ENCODE measurements at regions of chr20 and their contacts with region 1.

Region 1: GRCh38 chr20:45934586-45935415 is at the start of gene PCIF1:
- DNase-seq: peak; percentile 99
- total RNA-seq, gene PCIF1: 27.3 to 35.7 TPM

Region 2: DNA sequence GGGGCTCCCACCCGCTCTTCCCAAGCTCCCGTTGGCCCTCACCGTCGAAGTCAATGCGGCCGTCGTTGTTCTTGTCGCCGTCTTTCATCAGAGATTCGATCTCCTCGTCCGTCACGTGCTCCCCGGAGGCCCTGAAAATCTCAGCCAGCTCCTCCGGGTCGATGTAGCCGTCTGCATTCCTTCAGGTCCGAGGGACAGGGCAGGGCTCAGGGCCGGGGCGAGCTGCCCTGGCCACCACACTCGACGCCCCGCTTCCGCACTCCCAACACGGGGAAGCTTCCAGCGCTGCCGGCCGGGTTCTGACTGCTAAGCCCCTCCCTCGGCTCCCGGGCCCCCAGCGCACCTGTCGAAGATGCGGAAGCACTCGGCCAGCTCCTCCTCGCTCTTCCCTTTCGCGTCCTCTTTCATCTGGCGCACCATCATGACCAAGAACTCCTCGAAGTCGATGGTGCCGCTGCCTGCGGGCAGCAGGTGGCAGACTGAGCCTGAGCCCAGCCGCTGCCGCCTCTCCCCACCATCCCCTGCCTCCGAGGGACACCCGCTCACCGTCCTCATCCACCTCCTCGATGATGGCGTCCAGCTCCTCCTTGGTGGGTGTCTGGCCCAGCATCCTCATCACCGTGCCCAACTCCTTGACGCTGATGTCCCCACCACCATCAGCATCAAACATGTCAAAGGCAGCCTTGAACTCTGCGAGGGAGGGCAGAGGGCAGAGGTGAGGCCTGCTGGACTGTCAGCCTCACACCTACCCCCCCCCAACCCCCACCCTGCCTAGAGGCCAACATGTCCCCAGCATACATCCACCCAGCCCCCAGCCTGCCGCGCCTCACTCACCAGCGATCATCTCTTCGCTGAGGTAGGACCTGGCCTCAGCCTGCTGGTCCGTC is 110.6 kb before region 1 on chr20:
- intact Hi-C with region 1: loop called in 1 of 2 experiments (anchors 10 kb)
- DNase-seq: no peak

Region 3: DNA sequence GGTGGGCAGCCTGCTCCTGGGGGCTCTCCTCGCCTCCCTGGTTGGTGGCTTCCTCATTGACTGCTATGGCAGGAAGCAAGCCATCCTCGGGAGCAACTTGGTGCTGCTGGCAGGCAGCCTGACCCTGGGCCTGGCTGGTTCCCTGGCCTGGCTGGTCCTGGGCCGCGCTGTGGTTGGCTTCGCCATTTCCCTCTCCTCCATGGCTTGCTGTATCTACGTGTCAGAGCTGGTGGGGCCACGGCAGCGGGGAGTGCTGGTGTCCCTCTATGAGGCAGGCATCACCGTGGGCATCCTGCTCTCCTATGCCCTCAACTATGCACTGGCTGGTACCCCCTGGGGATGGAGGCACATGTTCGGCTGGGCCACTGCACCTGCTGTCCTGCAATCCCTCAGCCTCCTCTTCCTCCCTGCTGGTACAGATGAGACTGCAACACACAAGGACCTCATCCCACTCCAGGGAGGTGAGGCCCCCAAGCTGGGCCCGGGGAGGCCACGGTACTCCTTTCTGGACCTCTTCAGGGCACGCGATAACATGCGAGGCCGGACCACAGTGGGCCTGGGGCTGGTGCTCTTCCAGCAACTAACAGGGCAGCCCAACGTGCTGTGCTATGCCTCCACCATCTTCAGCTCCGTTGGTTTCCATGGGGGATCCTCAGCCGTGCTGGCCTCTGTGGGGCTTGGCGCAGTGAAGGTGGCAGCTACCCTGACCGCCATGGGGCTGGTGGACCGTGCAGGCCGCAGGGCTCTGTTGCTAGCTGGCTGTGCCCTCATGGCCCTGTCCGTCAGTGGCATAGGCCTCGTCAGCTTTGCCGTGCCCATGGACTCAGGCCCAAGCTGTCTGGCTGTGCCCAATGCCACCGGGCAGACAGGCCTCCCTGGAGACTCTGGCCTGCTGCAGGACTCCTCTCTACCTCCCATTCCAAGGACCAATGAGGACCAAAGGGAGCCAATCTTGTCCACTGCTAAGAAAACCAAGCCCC is 790.7 kb after region 1 on chr20:
- intact Hi-C with region 1: no loop called
- DNase-seq: no peak

Region 4: GRCh38 chr20:47019121-47019824 is 1084.5 kb after region 1 on chr20:
- intact Hi-C with region 1: no loop called
- DNase-seq: no peak

Measured in posterior vena cava (tissue), 2 donors.